HCT116 (cell line): ENCODE measurements at regions of chr4 and their contacts with region 1.

Region 1: GRCh38 chr4:44629280-44629866 is 22.1 kb downstream of the YIPF7 start:
- DNase-seq: peak; percentile 35
- ATAC-seq: peak; percentile 80
- H3K4me3 ChIP-seq: no peak overlapping the region
- H3K27ac ChIP-seq: no peak overlapping the region
- H3K4me1 ChIP-seq: no peaks in the 10 kb centered on the region
- H3K27me3 ChIP-seq: no peaks in the 10 kb centered on the region
- CTCF ChIP-seq: peak; percentile 21 to 63 (median 56); a peak in 4 of 6 replicates
- POLR2A ChIP-seq: no peak
- RAD21 ChIP-seq: peak; percentile 57

Region 2: GRCh38 chr4:42995343-42995944 is 1633.9 kb before region 1 on chr4:
- CTCF ChIA-PET with region 1: interaction called, 3 read pairs
- POLR2A ChIA-PET with region 1: no interaction called
- RAD21 ChIA-PET with region 1: no interaction called
- intact Hi-C with region 1: loop called (anchors 2 kb)
- DNase-seq: no peak
- ATAC-seq: no peak
- H3K4me3 ChIP-seq: no peak overlapping the region
- H3K27ac ChIP-seq: no peak overlapping the region
- H3K4me1 ChIP-seq: no peaks in the 10 kb centered on the region
- H3K27me3 ChIP-seq: no peaks in the 10 kb centered on the region
- CTCF ChIP-seq: peak in 2 of 3 experiments; percentile 54 to 56; a peak in 4 of 6 replicates
- POLR2A ChIP-seq: no peak
- RAD21 ChIP-seq: 0 out of 2 replicates have a peak, but pooled peaks have one; percentile 27

Region 3: GRCh38 chr4:43132010-43132582 is 1497.3 kb before region 1 on chr4:
- CTCF ChIA-PET with region 1: no interaction called
- POLR2A ChIA-PET with region 1: no interaction called
- RAD21 ChIA-PET with region 1: no interaction called
- intact Hi-C with region 1: loop called (anchors 1 kb)
- DNase-seq: peak; percentile 8
- ATAC-seq: no peak
- H3K4me3 ChIP-seq: no peak overlapping the region
- H3K27ac ChIP-seq: no peak overlapping the region
- H3K4me1 ChIP-seq: no peaks in the 10 kb centered on the region
- H3K27me3 ChIP-seq: no peaks in the 10 kb centered on the region
- CTCF ChIP-seq: peak in 2 of 3 experiments; percentile 65 to 67; a peak in 4 of 6 replicates
- POLR2A ChIP-seq: no peak
- RAD21 ChIP-seq: peak; percentile 41; the same call in 1 of the 2 replicates